ENCODE measurements at regions of chr7 and their contacts with region 1.

Region 1: DNA sequence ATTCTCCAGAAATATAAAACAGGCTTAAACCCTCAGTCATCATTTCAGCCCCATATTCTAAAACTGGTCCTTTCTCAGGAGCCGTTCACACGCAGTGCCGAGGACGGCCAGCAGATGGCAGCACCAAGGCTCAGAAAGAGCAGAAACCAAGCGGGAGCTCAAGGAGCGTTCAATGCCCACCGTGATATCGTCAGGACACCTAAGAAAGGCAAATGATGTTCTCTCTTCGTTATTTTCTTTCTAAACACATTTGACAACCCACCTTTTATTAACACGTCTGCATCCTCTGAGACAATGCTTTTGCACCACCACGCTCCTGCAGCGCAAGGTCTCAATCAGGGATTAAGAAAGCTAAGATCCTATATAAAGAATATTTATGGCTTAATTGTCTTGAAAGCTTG is 45.7 kb upstream of the RBM33 start:
- DNase-seq: peak; percentile 89
- ATAC-seq: peak; percentile 24; the same call in 1 of the 2 replicates
- H3K4me3 Mint-ChIP-seq: no peak overlapping the region
- H3K27ac Mint-ChIP-seq: no peak overlapping the region
- H3K4me1 Mint-ChIP-seq: peaks cover 39% of the 10 kb centered on the region
- H3K27me3 Mint-ChIP-seq: no peaks in the 10 kb centered on the region; the same call in 1 of the 2 replicates
- CTCF ChIP-seq: peak; percentile 94

Region 2: DNA sequence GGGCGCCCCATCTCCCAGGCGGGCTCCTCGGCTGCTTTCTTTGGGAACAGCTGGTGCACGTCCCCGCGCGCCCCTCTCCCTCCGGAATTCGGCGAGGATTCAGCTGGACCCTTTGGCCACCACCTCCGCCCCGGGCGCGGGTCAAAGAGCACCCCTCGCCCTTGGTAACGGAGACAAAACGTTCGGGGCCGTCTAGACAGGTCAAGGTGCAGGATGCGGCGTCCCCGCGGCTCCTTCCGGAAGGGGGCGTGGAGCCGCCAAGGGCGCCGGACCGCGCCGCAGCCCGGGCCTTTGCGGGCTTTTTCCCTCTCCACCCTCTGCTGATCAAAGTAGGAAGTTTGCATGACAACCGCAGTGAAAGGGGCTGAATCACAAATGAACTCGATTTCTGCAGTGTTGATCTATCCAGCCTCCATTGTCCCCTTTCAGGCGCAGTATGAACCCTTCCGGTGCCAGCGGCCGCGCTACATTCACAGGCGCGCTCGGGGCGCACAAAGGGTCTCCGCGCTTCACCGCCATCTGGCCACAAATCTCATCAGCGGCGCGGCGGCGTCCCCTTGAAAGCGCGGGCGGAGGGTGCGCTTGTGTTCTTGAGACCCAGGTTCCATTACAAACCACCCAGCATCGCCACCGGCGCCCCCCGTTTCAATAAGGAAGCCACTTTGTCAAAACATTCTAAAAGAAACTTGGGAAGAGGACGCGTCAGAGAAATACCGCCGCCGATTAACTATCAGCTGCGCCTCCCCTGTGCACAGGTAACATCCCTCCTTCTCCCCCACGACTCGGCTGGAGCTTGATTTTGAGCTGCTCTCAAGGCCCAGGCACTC is 88.9 kb before region 1 on chr7:
- CTCF ChIA-PET with region 1: interaction called, 10 read pairs
- POLR2A ChIA-PET with region 1: no interaction called
- DNase-seq: peak; percentile 73
- ATAC-seq: peak; percentile 84
- H3K4me3 Mint-ChIP-seq: peak overlapping the region; percentile 91
- H3K27ac Mint-ChIP-seq: peak overlapping the region; percentile 29; the same call in 1 of the 2 replicates
- H3K4me1 Mint-ChIP-seq: peaks cover 54% of the 10 kb centered on the region
- H3K27me3 Mint-ChIP-seq: peaks cover 95% of the 10 kb centered on the region
- CTCF ChIP-seq: no peak

Region 3: DNA sequence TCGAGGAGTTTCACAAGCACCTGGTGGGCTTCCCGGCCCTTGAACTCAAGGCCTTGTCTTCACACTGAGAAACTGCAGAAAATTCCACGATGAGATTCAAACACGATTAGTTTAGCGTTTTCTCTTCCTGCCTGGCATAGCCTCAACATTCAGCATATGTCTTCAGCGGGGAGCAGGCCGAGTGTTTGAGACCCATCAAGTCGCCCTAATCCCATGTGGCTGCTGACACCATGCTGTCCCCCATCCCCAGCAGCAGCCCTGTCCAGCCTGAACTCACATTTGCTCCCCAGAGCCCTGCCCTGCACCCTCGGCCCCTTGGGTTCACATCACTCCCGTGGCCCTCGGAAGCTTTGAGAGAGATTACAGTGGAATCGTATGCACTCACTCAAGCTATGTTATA is 10.4 kb after region 1 on chr7:
- CTCF ChIA-PET with region 1: interaction called, 18 read pairs
- POLR2A ChIA-PET with region 1: no interaction called
- DNase-seq: no peak
- ATAC-seq: no peak
- H3K4me3 Mint-ChIP-seq: no peak overlapping the region
- H3K27ac Mint-ChIP-seq: no peak overlapping the region
- H3K4me1 Mint-ChIP-seq: peaks cover 6% of the 10 kb centered on the region
- H3K27me3 Mint-ChIP-seq: no peaks in the 10 kb centered on the region
- CTCF ChIP-seq: no peak

Region 4: DNA sequence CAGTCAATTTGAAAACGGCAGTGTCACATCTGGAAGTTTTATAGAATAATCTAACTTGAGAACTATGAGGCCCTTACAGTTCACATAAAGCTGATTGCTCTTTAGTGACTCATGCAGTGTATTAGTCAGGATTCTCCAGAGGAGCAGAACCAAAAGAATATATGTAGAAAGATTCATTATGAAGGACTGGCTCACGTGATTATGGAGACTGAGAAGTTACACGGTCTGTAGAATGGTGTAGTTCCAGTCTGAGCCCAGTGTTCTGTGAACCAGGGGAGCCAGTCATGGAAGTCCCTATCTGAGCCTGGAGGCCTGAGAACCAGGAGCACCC is 67.1 kb after region 1 on chr7:
- CTCF ChIA-PET with region 1: interaction called, 22 read pairs
- POLR2A ChIA-PET with region 1: no interaction called
- DNase-seq: no peak
- ATAC-seq: no peak
- H3K4me3 Mint-ChIP-seq: no peak overlapping the region
- H3K27ac Mint-ChIP-seq: no peak overlapping the region
- H3K4me1 Mint-ChIP-seq: peaks cover 53% of the 10 kb centered on the region
- H3K27me3 Mint-ChIP-seq: no peaks in the 10 kb centered on the region
- CTCF ChIP-seq: no peak

Region 5: GRCh38 chr7:155724327-155725005 is 125.7 kb after region 1 on chr7:
- CTCF ChIA-PET with region 1: interaction called, 12 read pairs
- POLR2A ChIA-PET with region 1: no interaction called
- DNase-seq: peak; percentile 35
- ATAC-seq: peak; percentile 90
- H3K4me3 Mint-ChIP-seq: no peak overlapping the region
- H3K27ac Mint-ChIP-seq: no peak overlapping the region
- H3K4me1 Mint-ChIP-seq: peaks cover 13% of the 10 kb centered on the region
- H3K27me3 Mint-ChIP-seq: no peaks in the 10 kb centered on the region
- CTCF ChIP-seq: 0 out of 2 replicates have a peak, but pooled peaks have one; percentile 10

Region 6: GRCh38 chr7:155787171-155787851 is 188.5 kb after region 1 on chr7:
- CTCF ChIA-PET with region 1: interaction called, 13 read pairs
- POLR2A ChIA-PET with region 1: no interaction called
- DNase-seq: no peak
- ATAC-seq: peak; percentile 77
- H3K4me3 Mint-ChIP-seq: peak overlapping the region; percentile 60
- H3K27ac Mint-ChIP-seq: no peak overlapping the region
- H3K4me1 Mint-ChIP-seq: peaks cover 6% of the 10 kb centered on the region
- H3K27me3 Mint-ChIP-seq: peaks cover 34% of the 10 kb centered on the region
- CTCF ChIP-seq: no peak